ENCODE measurements at regions of chr1 and their contacts with region 1.

Region 1: GRCh38 chr1:145891587-145892485 is 6.2 kb upstream of the ANKRD35 start:
- DNase-seq: peak; percentile 94 to 97
- ATAC-seq: peak; percentile 90 to 95 (median 92)
- H3K4me3 ChIP-seq: peak overlapping the region; percentile 51
- H3K27ac ChIP-seq: peak overlapping the region; percentile 88
- H3K4me1 ChIP-seq: peaks cover 32% of the 10 kb centered on the region
- H3K27me3 ChIP-seq: no peaks in the 10 kb centered on the region
- CTCF ChIP-seq: peak; percentile 94

Region 2: GRCh38 chr1:145906954-145907753 is 15.3 kb after region 1 on chr1:
- intact Hi-C with region 1: loop called (anchors 1 to 2 kb)
- DNase-seq: no peak
- ATAC-seq: peak in 1 of 4 donors; percentile 12
- H3K4me3 ChIP-seq: no peak overlapping the region
- H3K27ac ChIP-seq: peak overlapping the region; percentile 53
- H3K4me1 ChIP-seq: peaks cover 6% of the 10 kb centered on the region
- H3K27me3 ChIP-seq: no peaks in the 10 kb centered on the region
- CTCF ChIP-seq: no peak

Region 3: DNA sequence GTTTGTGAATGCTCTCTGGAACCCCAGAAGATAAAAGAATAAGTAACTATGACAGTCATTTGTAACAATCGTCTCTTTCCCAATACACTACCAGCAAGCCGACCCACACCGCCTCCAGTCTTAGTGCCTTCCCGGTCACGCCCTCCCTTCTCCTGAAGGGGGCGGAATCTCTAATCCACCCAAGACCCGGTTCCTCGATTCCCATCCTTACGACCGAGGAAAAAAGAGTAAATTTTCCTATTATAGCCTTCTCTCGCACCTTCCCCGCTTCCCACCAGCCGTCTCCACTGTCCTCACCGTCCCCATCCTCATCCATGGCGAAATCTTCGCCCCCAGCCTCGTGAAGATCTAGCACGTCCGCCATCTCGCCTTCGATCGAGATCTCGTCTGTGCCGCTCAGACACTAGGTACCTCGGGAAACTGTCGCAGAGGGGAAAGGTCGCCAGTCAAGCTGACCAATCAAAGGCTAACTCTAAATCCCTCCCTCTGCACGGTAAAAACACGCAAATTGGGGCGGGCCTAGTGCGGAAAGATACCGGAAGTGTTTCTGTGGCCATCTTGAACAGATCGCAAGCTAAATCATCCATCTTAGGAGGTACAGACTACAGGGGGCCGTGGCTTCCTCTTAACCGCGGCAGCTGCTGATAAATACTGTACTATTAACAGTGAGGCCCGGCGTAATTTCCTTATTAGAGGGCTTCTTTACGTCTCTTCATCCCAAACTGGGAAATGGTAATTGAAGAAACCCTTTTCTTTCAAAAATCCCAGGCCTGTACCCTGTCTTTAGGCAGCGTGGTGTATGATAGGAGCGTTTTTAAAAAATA is 35.4 kb after region 1 on chr1 and contains the start of gene RBM8A:
- intact Hi-C with region 1: loop called in 1 of 2 experiments (anchors 1 kb)
- DNase-seq: peak; percentile 91 to 96
- ATAC-seq: peak; percentile 95 to 99 (median 96)
- H3K4me3 ChIP-seq: peak within 1 kb of the TSS; percentile 78
- H3K27ac ChIP-seq: peak within 1 kb of the TSS; percentile 98
- H3K4me1 ChIP-seq: peaks cover 14% of the 10 kb centered on the region
- H3K27me3 ChIP-seq: no peaks in the 10 kb centered on the region
- CTCF ChIP-seq: peak; percentile 60
- total RNA-seq, gene RBM8A: 82.9 to 254 (median 174) TPM

Region 4: GRCh38 chr1:146012737-146013403 is 121.0 kb after region 1 on chr1:
- intact Hi-C with region 1: loop called (anchors 2 to 5 kb)
- DNase-seq: no peak
- ATAC-seq: peak; percentile 53 to 78 (median 67)
- H3K4me3 ChIP-seq: no peak overlapping the region
- H3K27ac ChIP-seq: peak overlapping the region; percentile 26
- H3K4me1 ChIP-seq: peaks cover 24% of the 10 kb centered on the region
- H3K27me3 ChIP-seq: no peaks in the 10 kb centered on the region
- CTCF ChIP-seq: peak; percentile 73

Measured in psoas muscle (tissue), 8 donors.